ENCODE measurements at regions of chr19 and their contacts with region 1.

Region 1: GRCh38 chr19:39435499-39436349 is at the start of gene RPS16:
- DNase-seq: peak; percentile 98
- H3K4me3 Mint-ChIP-seq: peak within 1 kb of the TSS; percentile 81
- H3K27ac Mint-ChIP-seq: peak within 1 kb of the TSS; percentile 95
- H3K4me1 Mint-ChIP-seq: peaks cover 8% of the 10 kb centered on the region
- H3K27me3 Mint-ChIP-seq: no peaks in the 10 kb centered on the region
- CTCF ChIP-seq: no peak
- total RNA-seq, gene RPS16: 2,837 and 2,909 TPM in 2 replicates

Region 2: GRCh38 chr19:39372047-39372802 is 63.5 kb before region 1 on chr19:
- CTCF ChIA-PET with region 1: no interaction called
- POLR2A ChIA-PET with region 1: no interaction called
- intact Hi-C with region 1: no loop called
- DNase-seq: peak; percentile 47
- H3K4me3 Mint-ChIP-seq: no peak overlapping the region
- H3K27ac Mint-ChIP-seq: no peak overlapping the region
- H3K4me1 Mint-ChIP-seq: no peaks in the 10 kb centered on the region
- H3K27me3 Mint-ChIP-seq: no peaks in the 10 kb centered on the region
- CTCF ChIP-seq: no peak

Region 3: DNA sequence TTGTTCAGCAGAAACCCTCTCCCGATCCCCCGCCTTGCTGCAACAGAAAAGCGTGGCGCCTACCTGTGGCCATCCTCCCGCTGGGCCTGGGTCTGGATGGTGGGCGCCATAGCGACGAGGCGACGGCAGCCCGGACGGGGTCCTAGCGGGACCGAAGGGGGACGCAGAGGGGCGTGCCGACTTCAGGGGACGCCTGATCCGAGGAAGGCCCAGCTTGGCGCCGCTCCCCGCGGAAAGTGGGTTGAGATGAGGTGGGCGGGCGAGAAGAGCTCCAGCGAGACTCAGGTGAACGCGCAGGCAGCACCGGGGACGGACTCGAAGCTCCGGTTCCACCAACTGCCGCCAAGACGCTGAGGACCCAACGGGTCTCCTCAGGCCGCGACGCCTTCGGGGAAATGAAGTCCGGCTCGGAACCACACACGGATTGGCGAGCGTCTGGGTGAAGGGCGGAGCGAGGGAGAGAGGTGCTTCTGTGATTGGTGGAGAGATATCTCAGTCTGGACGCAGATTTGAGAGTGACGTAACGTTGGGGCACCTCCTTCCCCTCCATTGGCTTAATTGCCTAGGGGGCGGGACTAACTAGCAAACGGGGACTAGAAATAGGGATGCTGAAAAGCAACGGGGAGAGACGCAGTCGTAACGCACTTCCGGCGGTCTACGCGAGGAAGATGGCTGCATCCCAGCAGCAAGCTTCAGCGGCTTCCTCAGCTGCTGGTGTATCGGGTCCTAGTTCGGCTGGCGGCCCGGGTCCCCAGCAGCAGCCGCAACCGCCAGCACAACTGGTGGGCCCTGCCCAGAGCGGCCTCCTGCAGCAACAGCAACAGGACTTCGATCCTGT is 44.8 kb before region 1 on chr19 and contains the starts of genes MED29 and PAF1:
- CTCF ChIA-PET with region 1: interaction called, 4 read pairs
- POLR2A ChIA-PET with region 1: interaction called, 38 read pairs
- intact Hi-C with region 1: loop called (anchors 2 kb)
- DNase-seq: peak; percentile 100
- H3K4me3 Mint-ChIP-seq: peak within 1 kb of the TSS; percentile 93
- H3K27ac Mint-ChIP-seq: peak within 1 kb of the TSS; percentile 98
- H3K4me1 Mint-ChIP-seq: peaks cover 12% of the 10 kb centered on the region
- H3K27me3 Mint-ChIP-seq: no peaks in the 10 kb centered on the region
- CTCF ChIP-seq: no peak
- total RNA-seq, gene MED29: 24.3 and 31.7 TPM in 2 replicates
- total RNA-seq, gene PAF1: 47.0 and 48.5 TPM in 2 replicates

Region 4: GRCh38 chr19:39403331-39404312 is 32.1 kb before region 1 on chr19:
- CTCF ChIA-PET with region 1: interaction called, 9 read pairs
- POLR2A ChIA-PET with region 1: interaction called, 63 read pairs
- intact Hi-C with region 1: no loop called
- DNase-seq: peak; percentile 99
- H3K4me3 Mint-ChIP-seq: peak overlapping the region; percentile 80
- H3K27ac Mint-ChIP-seq: peak overlapping the region; percentile 100
- H3K4me1 Mint-ChIP-seq: peaks cover 39% of the 10 kb centered on the region
- H3K27me3 Mint-ChIP-seq: no peaks in the 10 kb centered on the region
- CTCF ChIP-seq: no peak

Region 5: DNA sequence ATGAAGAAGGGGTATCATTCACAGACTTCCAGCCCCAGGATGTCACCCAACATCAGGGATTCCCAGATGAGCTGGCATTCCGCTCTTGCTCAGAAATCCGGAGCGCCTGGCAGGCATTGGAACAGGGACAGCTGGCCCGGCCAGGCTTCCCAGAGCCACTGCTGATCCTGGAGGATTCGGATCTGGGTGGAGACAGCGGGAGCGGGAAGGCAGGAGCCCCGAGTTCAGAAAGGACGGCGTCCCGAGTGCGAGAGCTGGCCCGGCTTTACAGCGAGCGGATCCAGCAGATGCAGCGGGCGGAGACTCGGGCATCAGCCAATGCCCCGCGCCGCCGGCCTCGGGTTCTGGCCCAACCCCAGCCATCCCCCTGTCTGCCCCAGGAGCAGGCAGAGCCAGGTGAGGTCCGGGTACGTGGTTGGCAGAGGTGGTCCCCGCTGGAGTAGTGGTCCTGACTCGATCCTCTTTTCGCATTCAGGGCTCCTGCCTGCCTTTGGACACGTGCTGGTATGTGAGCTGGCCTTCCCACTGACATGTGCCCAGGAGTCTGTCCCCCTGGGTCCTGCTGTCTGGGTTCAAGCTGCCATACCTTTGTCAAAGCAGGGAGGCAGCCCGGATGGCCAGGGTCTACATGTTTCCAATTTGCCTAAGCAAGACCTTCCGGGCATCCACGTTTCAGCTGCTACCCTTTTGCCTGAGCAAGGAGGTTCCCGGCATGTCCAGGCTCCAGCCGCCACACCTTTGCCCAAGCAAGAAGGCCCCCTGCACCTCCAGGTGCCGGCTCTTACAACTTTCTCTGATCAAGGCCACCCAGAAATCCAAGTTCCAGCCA is 12.3 kb before region 1 on chr19:
- CTCF ChIA-PET with region 1: interaction called, 3 read pairs
- POLR2A ChIA-PET with region 1: interaction called, 35 read pairs
- intact Hi-C with region 1: no loop called
- DNase-seq: no peak
- H3K4me3 Mint-ChIP-seq: no peak overlapping the region
- H3K27ac Mint-ChIP-seq: no peak overlapping the region
- H3K4me1 Mint-ChIP-seq: no peaks in the 10 kb centered on the region
- H3K27me3 Mint-ChIP-seq: no peaks in the 10 kb centered on the region
- CTCF ChIP-seq: no peak

Region 6: GRCh38 chr19:39480337-39481228 is 44.9 kb after region 1 on chr19 and contains the start of gene TIMM50:
- CTCF ChIA-PET with region 1: no interaction called
- POLR2A ChIA-PET with region 1: interaction called, 14 read pairs
- intact Hi-C with region 1: no loop called
- DNase-seq: peak; percentile 96
- H3K4me3 Mint-ChIP-seq: peak within 1 kb of the TSS; percentile 88
- H3K27ac Mint-ChIP-seq: peak within 1 kb of the TSS; percentile 91
- H3K4me1 Mint-ChIP-seq: peaks cover 15% of the 10 kb centered on the region
- H3K27me3 Mint-ChIP-seq: no peaks in the 10 kb centered on the region
- CTCF ChIP-seq: no peak
- total RNA-seq, gene TIMM50: 71.2 and 94.2 TPM in 2 replicates

Region 7: DNA sequence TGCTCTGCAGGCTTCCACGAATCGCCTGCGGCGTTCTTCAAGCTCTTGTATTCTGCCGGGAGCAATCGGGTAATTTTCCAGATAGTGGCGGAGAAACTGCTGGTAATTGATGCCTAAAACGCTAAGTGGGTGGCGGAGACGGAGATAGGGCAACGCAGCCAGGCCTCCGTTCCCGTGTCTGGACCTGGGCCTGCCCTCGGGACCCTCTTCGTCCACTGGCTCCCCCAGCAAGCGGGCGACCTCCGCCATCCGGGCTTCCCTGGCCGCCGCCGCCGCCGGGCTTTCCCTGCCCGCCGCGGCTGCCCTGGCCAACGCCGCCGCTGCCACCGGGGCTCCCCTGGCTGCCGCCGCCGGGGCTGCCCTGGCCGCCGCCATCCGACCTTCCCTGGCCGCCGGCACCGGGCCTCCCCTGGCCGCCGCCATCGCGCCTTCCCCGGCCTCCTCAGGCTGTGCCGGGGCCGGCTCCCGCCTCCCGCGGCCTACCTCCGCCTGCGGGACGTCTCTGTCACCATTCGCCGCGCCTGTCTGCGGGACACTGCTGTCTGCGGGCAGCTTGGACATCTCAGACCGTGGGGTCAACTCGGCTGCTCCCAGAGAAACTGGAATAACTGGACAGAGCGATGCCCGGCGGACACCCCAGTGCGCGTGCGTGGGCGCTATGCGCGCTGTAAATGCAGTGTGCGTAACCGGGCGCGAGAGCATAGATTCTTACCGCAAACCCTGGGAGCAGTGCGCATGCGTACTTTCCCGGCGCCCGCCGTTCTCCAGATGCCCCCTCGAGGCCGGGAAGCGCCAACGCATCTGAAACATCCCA is 104.0 kb after region 1 on chr19 and contains the start of gene EID2:
- CTCF ChIA-PET with region 1: interaction called, 51 read pairs
- POLR2A ChIA-PET with region 1: interaction called, 21 read pairs
- intact Hi-C with region 1: loop called (anchors 2 kb)
- DNase-seq: peak; percentile 93
- H3K4me3 Mint-ChIP-seq: peak within 1 kb of the TSS; percentile 79
- H3K27ac Mint-ChIP-seq: no peak within 1 kb of the TSS
- H3K4me1 Mint-ChIP-seq: peaks cover 14% of the 10 kb centered on the region
- H3K27me3 Mint-ChIP-seq: no peaks in the 10 kb centered on the region
- CTCF ChIP-seq: peak; percentile 68
- total RNA-seq, gene EID2: 8.5 and 10.4 TPM in 2 replicates